Aorta (tissue), 5 donors: ENCODE measurements at regions of chr18 and their contacts with region 1.

Region 1: DNA sequence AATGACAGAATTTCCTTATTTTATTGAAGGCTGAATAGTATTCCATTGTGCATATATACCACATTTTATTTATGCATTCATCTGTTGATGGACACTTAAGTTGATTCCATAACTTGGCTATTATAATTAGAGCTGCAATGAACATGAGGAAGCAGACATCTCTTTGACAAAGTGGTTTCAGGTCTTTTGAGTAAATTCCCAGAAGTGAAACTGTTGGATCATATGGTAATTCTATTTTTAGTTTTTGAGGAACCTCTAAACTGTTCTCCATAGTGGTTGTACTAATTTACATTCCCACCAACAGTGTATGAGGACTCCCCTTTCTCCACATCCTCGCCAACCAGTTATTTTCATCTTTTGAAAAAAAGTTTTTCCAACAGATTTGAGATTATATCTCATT is 77.5 kb downstream of the TMEM200C start:
- DNase-seq: no peak
- ATAC-seq: no peak
- H3K4me3 ChIP-seq: no peak overlapping the region
- H3K27ac ChIP-seq: no peak overlapping the region
- H3K4me1 ChIP-seq: no peaks in the 10 kb centered on the region
- H3K27me3 ChIP-seq: no peaks in the 10 kb centered on the region

Region 2: GRCh38 chr18:5500158-5500939 is 317.5 kb before region 1 on chr18:
- intact Hi-C with region 1: no loop called
- DNase-seq: no peak
- ATAC-seq: no peak
- H3K4me3 ChIP-seq: no peak overlapping the region
- H3K27ac ChIP-seq: no peak overlapping the region
- H3K4me1 ChIP-seq: no peaks in the 10 kb centered on the region
- H3K27me3 ChIP-seq: peaks cover 0 to 2% of the 10 kb centered on the region in 2 donors

Region 3: DNA sequence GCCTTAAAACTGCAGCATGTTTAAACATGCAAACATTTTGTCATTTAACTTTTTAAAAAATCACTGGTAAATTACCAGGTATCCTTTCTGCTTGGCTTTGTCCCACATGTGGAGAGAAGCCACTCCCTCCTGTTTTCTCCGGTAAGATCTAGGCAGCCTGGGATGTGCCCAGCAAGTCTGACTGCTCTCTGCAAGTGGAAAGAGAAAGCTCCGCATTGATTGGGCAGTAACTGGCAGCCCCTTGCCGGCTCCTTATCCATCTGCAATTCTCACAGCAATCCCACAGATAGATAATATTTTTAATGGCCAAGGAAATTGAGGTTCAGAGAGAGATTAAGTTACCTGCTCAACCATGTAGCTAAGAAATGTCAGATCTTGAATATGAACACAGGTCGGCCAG is 58.6 kb before region 1 on chr18:
- intact Hi-C with region 1: loop called in 1 of 2 experiments (anchors 10 kb)
- DNase-seq: no peak
- ATAC-seq: no peak
- H3K4me3 ChIP-seq: no peak overlapping the region
- H3K27ac ChIP-seq: no peak overlapping the region
- H3K4me1 ChIP-seq: no peaks in the 10 kb centered on the region
- H3K27me3 ChIP-seq: peaks cover 0 to 4% of the 10 kb centered on the region in 2 donors

Region 4: GRCh38 chr18:5841518-5841917 is 23.7 kb after region 1 on chr18:
- intact Hi-C with region 1: no loop called
- DNase-seq: no peak
- ATAC-seq: no peak
- H3K4me3 ChIP-seq: no peak overlapping the region
- H3K27ac ChIP-seq: no peak overlapping the region
- H3K4me1 ChIP-seq: no peaks in the 10 kb centered on the region
- H3K27me3 ChIP-seq: no peaks in the 10 kb centered on the region